Activated B cell treated with CpG ODN at 0.5 μM for 24 hours (primary cell): ENCODE measurements at regions of chr10 and their contacts with region 1.

Region 1: GRCh38 chr10:70815504-70816219 is at the start of gene SGPL1:
- DNase-seq: peak; percentile 90
- ATAC-seq: peak; percentile 95
- H3K4me3 Mint-ChIP-seq: peak within 1 kb of the TSS; percentile 90
- H3K27ac Mint-ChIP-seq: peak within 1 kb of the TSS; percentile 82
- H3K4me1 Mint-ChIP-seq: peaks cover 26% of the 10 kb centered on the region
- H3K27me3 Mint-ChIP-seq: peaks cover 2% of the 10 kb centered on the region
- CTCF ChIP-seq: no peak
- total RNA-seq, gene SGPL1: 35.9 and 36.3 TPM in 2 replicates

Region 2: GRCh38 chr10:70169649-70170364 is 645.9 kb before region 1 on chr10:
- CTCF ChIA-PET with region 1: no interaction called
- POLR2A ChIA-PET with region 1: no interaction called
- intact Hi-C with region 1: loop called (anchors 5 kb)
- DNase-seq: no peak
- ATAC-seq: peak; percentile 29
- H3K4me3 Mint-ChIP-seq: peak overlapping the region; percentile 94
- H3K27ac Mint-ChIP-seq: peak overlapping the region; percentile 93
- H3K4me1 Mint-ChIP-seq: peaks cover 43% of the 10 kb centered on the region
- H3K27me3 Mint-ChIP-seq: no peaks in the 10 kb centered on the region
- CTCF ChIP-seq: no peak

Region 3: DNA sequence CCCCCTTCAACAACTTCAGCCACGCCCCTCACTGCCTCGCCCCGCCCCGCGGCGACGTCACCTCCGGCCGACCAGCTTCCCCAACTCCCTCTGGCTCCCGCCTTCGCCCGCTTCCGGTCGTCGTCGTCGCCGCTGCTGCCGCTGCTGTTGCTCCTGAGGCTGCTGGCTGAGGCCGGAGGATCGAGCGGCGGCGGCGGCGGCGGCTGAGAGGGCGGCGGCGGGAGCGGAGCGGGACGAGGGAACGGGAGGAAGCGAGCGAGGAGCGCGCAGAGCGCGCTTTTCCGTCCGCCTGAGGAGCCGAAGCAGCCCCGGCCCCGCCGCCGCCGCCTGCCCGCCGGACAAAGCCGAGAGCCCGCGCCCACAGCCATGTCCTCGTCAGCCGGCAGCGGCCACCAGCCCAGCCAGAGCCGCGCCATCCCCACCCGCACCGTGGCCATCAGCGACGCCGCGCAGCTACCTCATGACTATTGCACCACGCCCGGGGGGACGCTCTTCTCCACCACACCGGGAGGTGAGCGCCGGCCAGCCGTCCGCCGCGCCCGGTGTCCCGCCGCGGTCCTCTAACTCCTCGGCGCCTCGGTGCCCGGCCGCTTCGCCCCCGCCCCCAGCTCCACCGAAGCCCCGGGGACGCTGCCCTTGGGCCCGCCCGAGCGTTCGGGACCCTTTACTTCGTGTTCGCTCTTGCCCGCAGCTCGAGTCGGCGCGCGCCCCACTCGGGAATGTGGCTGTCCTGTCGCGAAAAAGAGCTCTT is 411.5 kb before region 1 on chr10 and contains the start of gene EIF4EBP2:
- CTCF ChIA-PET with region 1: no interaction called
- POLR2A ChIA-PET with region 1: interaction called, 3 read pairs
- intact Hi-C with region 1: loop called (anchors 1 kb)
- DNase-seq: peak; percentile 100
- ATAC-seq: peak; percentile 98
- H3K4me3 Mint-ChIP-seq: peak within 1 kb of the TSS; percentile 92
- H3K27ac Mint-ChIP-seq: peak within 1 kb of the TSS; percentile 80
- H3K4me1 Mint-ChIP-seq: peaks cover 32% of the 10 kb centered on the region
- H3K27me3 Mint-ChIP-seq: no peaks in the 10 kb centered on the region
- CTCF ChIP-seq: no peak
- total RNA-seq, gene EIF4EBP2: 38.7 and 40.6 TPM in 2 replicates

Region 4: DNA sequence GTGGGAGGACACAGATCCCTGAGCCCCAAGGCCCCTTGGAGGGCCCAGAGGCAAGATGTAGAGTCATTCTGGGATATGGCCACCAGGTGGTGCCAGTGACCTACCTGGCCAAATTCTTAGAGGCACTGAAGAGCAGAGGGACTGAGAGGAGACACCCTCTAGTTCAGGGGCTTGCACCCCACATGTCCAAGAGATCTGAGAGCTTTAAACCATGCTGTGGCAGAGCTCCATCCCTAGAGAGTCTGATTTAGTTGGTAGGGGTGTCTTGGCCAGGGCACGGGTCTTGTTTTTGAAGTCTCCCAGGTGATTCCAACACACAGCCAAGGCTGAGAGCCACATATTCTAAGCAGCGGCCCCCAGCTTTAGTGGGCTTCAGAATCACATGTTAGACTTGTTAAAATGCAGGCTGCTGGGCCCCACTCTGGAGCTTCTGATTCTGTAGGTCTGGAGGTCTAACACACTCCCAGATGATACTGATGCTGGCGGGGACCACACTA is 265.7 kb before region 1 on chr10:
- CTCF ChIA-PET with region 1: no interaction called
- POLR2A ChIA-PET with region 1: no interaction called
- intact Hi-C with region 1: loop called (anchors 1 kb)
- DNase-seq: peak; percentile 58
- ATAC-seq: peak; percentile 75
- H3K4me3 Mint-ChIP-seq: no peak overlapping the region
- H3K27ac Mint-ChIP-seq: no peak overlapping the region
- H3K4me1 Mint-ChIP-seq: no peaks in the 10 kb centered on the region
- H3K27me3 Mint-ChIP-seq: no peaks in the 10 kb centered on the region
- CTCF ChIP-seq: no peak

Region 5: GRCh38 chr10:70575874-70576802 is 239.5 kb before region 1 on chr10:
- CTCF ChIA-PET with region 1: no interaction called
- POLR2A ChIA-PET with region 1: no interaction called
- intact Hi-C with region 1: no loop called
- DNase-seq: no peak
- ATAC-seq: peak; percentile 56
- H3K4me3 Mint-ChIP-seq: peak overlapping the region; percentile 57
- H3K27ac Mint-ChIP-seq: peak overlapping the region; percentile 57
- H3K4me1 Mint-ChIP-seq: peaks cover 55% of the 10 kb centered on the region
- H3K27me3 Mint-ChIP-seq: no peaks in the 10 kb centered on the region
- CTCF ChIP-seq: no peak

Region 6: GRCh38 chr10:70722820-70723424 is 92.7 kb before region 1 on chr10:
- CTCF ChIA-PET with region 1: no interaction called
- POLR2A ChIA-PET with region 1: no interaction called
- intact Hi-C with region 1: no loop called
- DNase-seq: no peak
- ATAC-seq: no peak
- H3K4me3 Mint-ChIP-seq: no peak overlapping the region
- H3K27ac Mint-ChIP-seq: no peak overlapping the region
- H3K4me1 Mint-ChIP-seq: no peaks in the 10 kb centered on the region
- H3K27me3 Mint-ChIP-seq: no peaks in the 10 kb centered on the region
- CTCF ChIP-seq: no peak

Region 7: GRCh38 chr10:70863470-70864160 is 48.0 kb after region 1 on chr10:
- CTCF ChIA-PET with region 1: no interaction called
- POLR2A ChIA-PET with region 1: no interaction called
- intact Hi-C with region 1: loop called (anchors 5 kb)
- DNase-seq: no peak
- ATAC-seq: no peak
- H3K4me3 Mint-ChIP-seq: no peak overlapping the region
- H3K27ac Mint-ChIP-seq: no peak overlapping the region
- H3K4me1 Mint-ChIP-seq: no peaks in the 10 kb centered on the region
- H3K27me3 Mint-ChIP-seq: no peaks in the 10 kb centered on the region
- CTCF ChIP-seq: no peak

Region 8: DNA sequence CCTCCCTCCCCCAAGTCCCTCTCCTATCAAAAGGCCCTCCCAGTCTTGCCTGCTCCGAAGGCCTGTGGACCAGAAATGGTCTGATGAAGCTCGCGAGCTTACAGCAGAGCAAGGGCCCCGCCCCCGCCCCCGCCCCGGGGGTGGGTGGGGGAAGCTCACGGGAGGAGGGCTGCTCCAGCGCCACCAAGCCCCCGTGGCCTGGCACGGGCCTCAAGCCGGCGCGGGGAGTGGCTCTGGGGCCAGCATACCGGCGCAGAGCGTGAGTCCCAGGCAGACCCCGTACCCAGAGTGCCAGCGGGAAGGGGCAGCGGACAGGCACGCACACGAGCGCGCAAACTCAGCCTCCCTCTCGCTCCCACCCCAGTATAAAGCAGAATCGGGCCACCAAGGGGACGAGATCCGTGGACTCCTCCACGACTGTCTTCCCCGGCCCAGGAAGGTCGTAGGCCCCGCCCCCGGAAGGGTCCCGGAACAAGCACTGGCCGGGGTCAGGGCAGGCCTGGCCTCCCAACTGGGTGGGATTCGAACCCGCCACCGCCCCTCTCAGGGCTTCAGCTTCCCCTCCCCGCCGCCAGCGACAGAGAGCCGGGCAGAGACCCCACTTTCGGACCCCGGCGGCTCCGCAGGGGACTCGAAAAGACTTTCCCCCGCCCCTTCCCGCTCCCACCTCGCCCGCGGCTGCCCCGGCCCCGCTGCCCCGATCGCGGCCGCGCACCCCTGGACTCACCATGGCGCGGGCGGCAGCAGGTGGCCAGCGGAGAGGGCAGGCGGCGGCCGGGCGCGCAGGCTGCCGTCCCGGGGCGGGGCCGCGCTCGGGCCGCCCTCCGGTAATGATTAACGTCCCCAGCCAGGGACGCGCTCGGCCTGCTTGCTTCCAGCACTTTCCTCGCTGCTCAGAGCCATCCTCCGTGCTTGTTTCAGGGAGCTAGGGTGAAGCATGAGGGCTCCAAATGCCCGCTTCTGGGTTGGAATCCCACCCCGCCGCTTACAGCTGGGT is 72.4 kb after region 1 on chr10 and contains the start of gene PCBD1:
- CTCF ChIA-PET with region 1: no interaction called
- POLR2A ChIA-PET with region 1: interaction called, 5 read pairs
- intact Hi-C with region 1: loop called (anchors 2 kb)
- DNase-seq: peak; percentile 73
- ATAC-seq: peak; percentile 92
- H3K4me3 Mint-ChIP-seq: peak within 1 kb of the TSS; percentile 84
- H3K27ac Mint-ChIP-seq: peak within 1 kb of the TSS; percentile 76
- H3K4me1 Mint-ChIP-seq: peaks cover 8% of the 10 kb centered on the region
- H3K27me3 Mint-ChIP-seq: no peaks in the 10 kb centered on the region
- CTCF ChIP-seq: no peak
- total RNA-seq, gene PCBD1: 37.3 and 41.4 TPM in 2 replicates